Right lobe of liver (tissue), 6 donors: ENCODE measurements at regions of chr11 and their contacts with region 1.

Region 1: GRCh38 chr11:75532200-75533048 is 6.7 kb upstream of the GDPD5 start:
- DNase-seq: peak; percentile 61 to 74 (median 69)
- ATAC-seq: peak; percentile 76 to 88 (median 88)
- H3K4me3 ChIP-seq: no peak overlapping the region
- H3K27ac ChIP-seq: no peak overlapping the region
- H3K4me1 ChIP-seq: no peaks in the 10 kb centered on the region
- H3K27me3 ChIP-seq: no peaks in the 10 kb centered on the region
- CTCF ChIP-seq: peak; percentile 88 to 91 (median 89)
- POLR2A ChIP-seq: no peak

Region 2: DNA sequence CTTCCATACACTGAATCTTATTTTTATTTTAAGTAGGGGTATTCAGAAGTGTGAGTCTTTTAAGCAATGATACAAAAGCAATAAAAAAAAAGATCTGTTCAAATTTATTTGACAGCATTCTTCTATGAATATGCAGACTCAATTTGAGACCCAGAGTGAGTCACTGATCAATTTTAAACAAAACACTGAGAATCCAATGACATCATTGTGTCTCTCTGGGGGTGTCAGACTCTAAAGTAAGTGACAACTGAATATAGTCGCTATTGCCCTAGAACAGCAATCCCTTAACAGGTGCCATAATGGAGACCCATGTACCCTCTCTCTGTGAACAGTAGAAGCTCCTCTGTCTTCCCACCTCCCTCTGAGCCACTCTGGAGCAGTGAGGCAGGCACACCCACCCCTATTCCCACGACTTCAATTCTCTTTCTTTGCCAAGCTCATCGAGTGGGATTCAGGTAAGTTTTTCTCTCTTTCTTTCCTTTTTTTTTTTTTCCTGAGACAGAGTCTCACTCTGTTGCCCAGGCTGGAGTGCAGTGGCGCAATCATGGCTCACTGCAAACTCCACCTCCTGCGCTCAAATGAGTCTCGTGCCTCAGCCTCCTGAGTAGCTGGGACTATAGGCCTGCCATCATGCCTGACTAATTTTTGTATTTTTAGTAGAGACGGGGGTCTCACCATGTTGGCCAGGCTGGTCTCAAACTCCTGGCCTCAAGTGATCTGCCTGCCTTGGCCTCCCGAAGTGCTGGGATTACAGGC is 138.2 kb before region 1 on chr11:
- intact Hi-C with region 1: loop called in 1 of 2 experiments (anchors 5 kb)
- DNase-seq: no peak
- ATAC-seq: no peak
- H3K4me3 ChIP-seq: no peak overlapping the region
- H3K27ac ChIP-seq: no peak overlapping the region
- H3K4me1 ChIP-seq: no peaks in the 10 kb centered on the region
- H3K27me3 ChIP-seq: no peaks in the 10 kb centered on the region
- CTCF ChIP-seq: no peak
- POLR2A ChIP-seq: no peak

Region 3: DNA sequence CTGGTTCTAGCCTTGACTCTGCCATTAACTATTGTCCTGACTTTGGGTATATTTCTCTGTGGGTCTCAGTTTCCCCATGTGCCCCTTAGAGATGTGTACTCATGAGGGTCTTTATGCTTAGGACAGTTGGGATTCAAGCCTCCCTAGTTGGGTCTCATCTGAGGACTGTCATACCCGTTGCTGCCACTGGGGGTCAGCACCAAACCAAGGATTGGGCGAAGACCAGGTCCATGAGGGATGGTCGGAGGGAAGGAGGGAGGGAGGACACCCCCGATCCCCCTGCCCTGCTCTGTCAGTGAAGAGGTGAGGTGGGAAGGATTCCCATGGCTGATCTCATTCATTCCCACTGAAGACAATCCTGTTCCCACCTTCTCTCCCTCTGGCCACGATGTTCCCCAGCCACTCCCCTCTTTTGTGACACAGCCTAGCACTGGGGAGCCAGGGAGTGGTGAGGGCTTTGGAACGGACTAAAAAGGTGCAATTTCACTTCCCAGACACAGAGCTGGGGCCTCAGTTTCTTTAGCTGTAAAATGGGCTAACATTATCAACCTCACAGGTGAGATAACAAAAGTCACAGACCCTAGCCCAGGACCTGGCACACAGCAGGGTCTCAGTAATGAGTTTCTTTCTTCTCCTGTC is 87.0 kb before region 1 on chr11:
- intact Hi-C with region 1: loop called (anchors 2 to 5 kb)
- DNase-seq: peak in 2 of 3 donors; percentile 63 to 74
- ATAC-seq: peak; percentile 76 to 88 (median 87)
- H3K4me3 ChIP-seq: no peak overlapping the region
- H3K27ac ChIP-seq: no peak overlapping the region
- H3K4me1 ChIP-seq: no peaks in the 10 kb centered on the region
- H3K27me3 ChIP-seq: no peaks in the 10 kb centered on the region
- CTCF ChIP-seq: peak; percentile 94 to 96 (median 95)
- POLR2A ChIP-seq: no peak

Region 4: GRCh38 chr11:75499449-75500190 is 32.8 kb before region 1 on chr11:
- intact Hi-C with region 1: no loop called
- DNase-seq: no peak
- ATAC-seq: peak; percentile 9 to 28 (median 16)
- H3K4me3 ChIP-seq: no peak overlapping the region
- H3K27ac ChIP-seq: no peak overlapping the region
- H3K4me1 ChIP-seq: no peaks in the 10 kb centered on the region
- H3K27me3 ChIP-seq: no peaks in the 10 kb centered on the region
- CTCF ChIP-seq: no peak
- POLR2A ChIP-seq: no peak

Region 5: DNA sequence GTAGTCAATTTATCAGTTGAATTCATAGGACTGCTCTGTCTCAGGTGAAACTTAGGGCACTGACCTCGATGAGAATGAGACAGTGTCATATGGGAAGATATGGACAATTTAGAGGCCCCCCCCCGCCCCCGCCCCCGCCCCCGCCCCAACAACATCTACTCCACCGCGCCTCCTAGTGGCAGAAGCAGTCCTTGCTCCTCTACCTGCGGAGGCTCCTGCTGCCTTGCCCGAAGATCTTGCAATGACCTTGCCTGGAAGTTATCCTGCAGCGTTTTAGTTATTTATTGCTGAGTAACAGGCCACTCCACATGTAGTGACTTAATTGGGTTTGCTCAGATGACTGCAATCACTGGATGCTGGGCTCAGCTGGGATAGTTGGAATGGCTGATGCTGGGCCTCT is 44.8 kb after region 1 on chr11:
- intact Hi-C with region 1: no loop called
- DNase-seq: peak in 1 of 3 donors; percentile 55
- ATAC-seq: peak; percentile 47 to 59 (median 53)
- H3K4me3 ChIP-seq: no peak overlapping the region
- H3K27ac ChIP-seq: no peak overlapping the region
- H3K4me1 ChIP-seq: peaks cover 0 to 2% (median 0%) of the 10 kb centered on the region in 4 donors
- H3K27me3 ChIP-seq: no peaks in the 10 kb centered on the region
- CTCF ChIP-seq: peak; percentile 11 to 55 (median 47)
- POLR2A ChIP-seq: no peak

Region 6: DNA sequence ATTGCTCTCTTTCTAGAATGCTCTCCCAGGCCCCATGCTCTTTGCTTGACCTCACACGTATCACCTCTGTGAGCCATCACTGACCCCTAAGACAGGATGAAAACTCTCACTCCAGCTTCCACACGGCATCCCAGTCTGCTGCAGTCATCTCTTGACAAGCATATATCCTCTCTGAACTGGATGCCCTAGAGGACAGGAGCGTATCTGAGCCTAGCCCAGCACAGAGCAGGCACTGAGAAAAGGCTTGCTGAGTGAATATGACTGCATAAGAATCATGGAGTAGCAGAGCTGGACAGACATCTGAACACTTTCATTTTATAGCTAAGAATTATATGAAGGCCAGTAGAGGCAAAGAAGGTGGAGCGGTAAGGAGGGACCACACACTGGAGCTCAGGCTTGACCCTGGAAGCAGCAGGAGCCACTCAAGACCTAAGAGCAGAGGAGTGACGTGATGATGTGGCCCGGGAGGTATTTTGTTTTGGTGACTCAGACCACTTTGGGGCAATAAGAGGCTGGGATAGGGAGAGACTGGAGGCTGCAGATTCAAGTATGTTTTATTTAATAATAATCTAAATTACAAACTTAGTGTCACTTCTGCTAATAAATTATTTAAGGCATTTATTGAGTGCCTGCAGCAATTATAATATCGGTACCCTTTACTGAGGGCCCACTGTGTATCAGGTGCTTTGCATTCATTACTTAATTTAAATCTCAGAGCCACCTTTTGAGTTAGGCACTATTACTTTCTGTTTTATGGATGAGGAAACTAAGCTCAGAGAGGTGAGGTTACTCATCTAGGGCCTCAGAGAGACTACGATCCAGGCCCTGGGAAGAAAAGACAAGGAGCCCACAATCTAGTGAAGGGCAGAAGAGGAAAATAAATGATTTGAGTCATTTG is 93.8 kb after region 1 on chr11:
- intact Hi-C with region 1: no loop called
- DNase-seq: no peak
- ATAC-seq: no peak
- H3K4me3 ChIP-seq: no peak overlapping the region
- H3K27ac ChIP-seq: no peak overlapping the region
- H3K4me1 ChIP-seq: no peaks in the 10 kb centered on the region
- H3K27me3 ChIP-seq: no peaks in the 10 kb centered on the region
- CTCF ChIP-seq: no peak
- POLR2A ChIP-seq: no peak